Activated CD4-positive, alpha-beta T cell treated with anti-CD3 and anti-CD28 coated beads for 36 hours (primary cell): ENCODE measurements at regions of chr10 and their contacts with region 1.

Region 1: GRCh38 chr10:32445740-32446535 is at the start of gene CCDC7:
- DNase-seq: peak; percentile 91
- ATAC-seq: peak; percentile 97
- H3K4me3 Mint-ChIP-seq: peak within 1 kb of the TSS; percentile 82
- H3K27ac Mint-ChIP-seq: peak within 1 kb of the TSS; percentile 99
- H3K4me1 Mint-ChIP-seq: peaks cover 10% of the 10 kb centered on the region
- H3K27me3 Mint-ChIP-seq: no peaks in the 10 kb centered on the region
- total RNA-seq, gene CCDC7: 9.0 TPM

Region 2: GRCh38 chr10:32459051-32459698 is 13.2 kb after region 1 on chr10:
- CTCF ChIA-PET with region 1: interaction called, 3 read pairs
- POLR2A ChIA-PET with region 1: no interaction called
- intact Hi-C with region 1: loop called in 1 of 2 experiments (anchors 2 kb)
- DNase-seq: no peak
- ATAC-seq: peak; percentile 74
- H3K4me3 Mint-ChIP-seq: no peak overlapping the region
- H3K27ac Mint-ChIP-seq: no peak overlapping the region
- H3K4me1 Mint-ChIP-seq: peaks cover 41% of the 10 kb centered on the region
- H3K27me3 Mint-ChIP-seq: no peaks in the 10 kb centered on the region